ENCODE measurements at regions of chr11 and their contacts with region 1.

Region 1: GRCh38 chr11:107951155-107951554 is 22.9 kb downstream of the RAB39A start:
- DNase-seq: no peak
- ATAC-seq: no peak
- H3K4me3 ChIP-seq: no peak overlapping the region
- H3K27ac ChIP-seq: no peak overlapping the region
- H3K4me1 ChIP-seq: no peaks in the 10 kb centered on the region
- H3K27me3 ChIP-seq: no peaks in the 10 kb centered on the region
- CTCF ChIP-seq: no peak
- POLR2A ChIP-seq: no peak
- RAD21 ChIP-seq: no peak

Region 2: DNA sequence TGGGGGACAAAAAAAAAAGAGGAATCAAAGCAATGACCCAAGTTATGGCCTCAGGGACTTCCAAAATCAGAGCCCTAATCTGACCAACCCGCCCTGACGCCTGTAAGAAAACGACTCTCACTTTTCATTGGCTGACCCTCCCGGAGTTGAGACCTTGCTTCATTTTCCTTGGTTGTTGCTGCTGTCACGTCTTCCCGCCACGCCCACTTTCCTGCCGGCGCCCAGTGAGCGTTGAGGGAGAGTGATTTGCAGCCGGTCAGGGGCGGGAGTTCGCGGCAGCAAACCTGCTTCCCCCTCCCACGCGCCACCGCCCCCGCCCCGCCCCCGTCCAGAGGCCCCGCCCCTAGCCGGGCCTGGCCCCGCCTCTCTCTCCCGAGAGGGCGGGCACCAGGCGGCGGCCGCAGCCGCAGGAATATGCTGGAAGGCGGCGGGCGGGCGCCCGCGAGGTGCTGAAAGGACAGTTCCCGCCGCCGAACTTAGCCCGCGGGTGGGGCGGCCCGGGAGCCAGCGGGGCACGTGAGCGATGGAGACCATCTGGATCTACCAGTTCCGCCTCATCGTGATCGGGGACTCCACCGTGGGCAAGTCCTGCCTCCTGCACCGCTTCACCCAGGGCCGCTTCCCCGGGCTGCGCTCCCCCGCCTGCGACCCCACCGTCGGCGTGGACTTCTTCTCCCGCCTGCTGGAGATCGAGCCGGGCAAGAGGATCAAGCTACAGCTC is 22.9 kb before region 1 on chr11 and contains the start of gene RAB39A:
- CTCF ChIA-PET with region 1: no interaction called
- POLR2A ChIA-PET with region 1: interaction called, 11 read pairs
- dilution Hi-C with region 1: no loop called
- in situ Hi-C with region 1: no loop called
- intact Hi-C with region 1: no loop called
- DNase-seq: peak; percentile 79
- ATAC-seq: peak; percentile 99
- H3K4me3 ChIP-seq: peak within 1 kb of the TSS; percentile 26; the same call in 1 of the 2 replicates
- H3K27ac ChIP-seq: no peak within 1 kb of the TSS
- H3K4me1 ChIP-seq: no peaks in the 10 kb centered on the region
- H3K27me3 ChIP-seq: peaks cover 6% of the 10 kb centered on the region
- CTCF ChIP-seq: no peak
- POLR2A ChIP-seq: no peak
- RAD21 ChIP-seq: no peak
- total RNA-seq, gene RAB39A: not detected in 2 replicates

Region 3: GRCh38 chr11:108121274-108122155 is 170.4 kb after region 1 on chr11 and contains the start of gene ACAT1:
- CTCF ChIA-PET with region 1: no interaction called
- POLR2A ChIA-PET with region 1: no interaction called
- dilution Hi-C with region 1: no loop called
- in situ Hi-C with region 1: no loop called
- intact Hi-C with region 1: no loop called
- DNase-seq: peak; percentile 82
- ATAC-seq: peak; percentile 98
- H3K4me3 ChIP-seq: peak within 1 kb of the TSS; percentile 86
- H3K27ac ChIP-seq: peak within 1 kb of the TSS; percentile 70
- H3K4me1 ChIP-seq: peaks cover 3% of the 10 kb centered on the region
- H3K27me3 ChIP-seq: no peaks in the 10 kb centered on the region
- CTCF ChIP-seq: peak; percentile 18; the same call in 1 of the 2 replicates
- POLR2A ChIP-seq: peak; percentile 83
- RAD21 ChIP-seq: no peak
- total RNA-seq, gene ACAT1: 57.7 and 87.2 TPM in 2 replicates